ENCODE measurements at regions of chr11 and their contacts with region 1.

Region 1: GRCh38 chr11:43895601-43896000 is 15.0 kb downstream of the ALKBH3 start:
- DNase-seq: no peak
- ATAC-seq: no peak
- H3K4me3 ChIP-seq: no peak overlapping the region
- H3K27ac ChIP-seq: no peak overlapping the region
- H3K4me1 ChIP-seq: no peaks in the 10 kb centered on the region
- H3K27me3 ChIP-seq: no peaks in the 10 kb centered on the region
- CTCF ChIP-seq: no peak
- EP300 ChIP-seq: no peak
- POLR2A ChIP-seq: no peak
- RAD21 ChIP-seq: no peak

Region 2: DNA sequence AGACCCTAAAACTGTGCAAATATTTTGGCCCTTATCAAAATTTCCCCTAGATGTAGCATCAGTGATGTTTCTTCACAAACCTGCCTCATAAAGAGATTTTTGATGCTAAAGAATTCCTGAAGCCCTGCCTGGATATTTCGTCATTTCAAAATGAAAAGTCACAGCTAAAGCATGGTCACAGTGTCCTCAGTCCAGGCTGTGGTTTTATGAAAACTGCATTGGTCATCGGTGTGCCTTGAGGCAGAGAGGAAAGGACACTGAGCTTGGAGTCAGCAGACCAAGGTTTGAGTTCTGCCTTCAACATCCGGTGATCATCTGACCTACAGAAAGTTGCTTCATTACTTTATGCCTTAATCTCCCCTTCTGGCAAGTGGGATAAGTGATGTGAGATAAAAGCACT is 49.8 kb before region 1 on chr11:
- CTCF ChIA-PET with region 1: no interaction called
- POLR2A ChIA-PET with region 1: no interaction called
- RAD21 ChIA-PET with region 1: no interaction called
- SMC1A ChIA-PET with region 1: no interaction called
- in situ Hi-C with region 1: no loop called
- intact Hi-C with region 1: loop called (anchors 5 kb)
- DNase-seq: no peak
- ATAC-seq: no peak
- H3K4me3 ChIP-seq: no peak overlapping the region
- H3K27ac ChIP-seq: no peak overlapping the region
- H3K4me1 ChIP-seq: no peaks in the 10 kb centered on the region
- H3K27me3 ChIP-seq: no peaks in the 10 kb centered on the region
- CTCF ChIP-seq: no peak
- EP300 ChIP-seq: no peak
- POLR2A ChIP-seq: no peak
- RAD21 ChIP-seq: no peak

Region 3: GRCh38 chr11:43880640-43881159 is 14.9 kb before region 1 on chr11 and contains the start of gene ALKBH3:
- CTCF ChIA-PET with region 1: interaction called, 8 read pairs
- POLR2A ChIA-PET with region 1: no interaction called
- RAD21 ChIA-PET with region 1: no interaction called
- SMC1A ChIA-PET with region 1: interaction called, 10 read pairs
- in situ Hi-C with region 1: no loop called
- intact Hi-C with region 1: no loop called
- DNase-seq: peak; percentile 65
- ATAC-seq: peak; percentile 100
- H3K4me3 ChIP-seq: peak within 1 kb of the TSS; percentile 83
- H3K27ac ChIP-seq: peak within 1 kb of the TSS; percentile 47; the same call in 1 of the 2 replicates
- H3K4me1 ChIP-seq: peaks cover 4% of the 10 kb centered on the region
- H3K27me3 ChIP-seq: no peaks in the 10 kb centered on the region
- CTCF ChIP-seq: no peak
- EP300 ChIP-seq: no peak
- POLR2A ChIP-seq: peak; percentile 90
- RAD21 ChIP-seq: no peak
- polyA plus RNA-seq, gene ALKBH3: 22.1 to 36.9 TPM

Region 4: DNA sequence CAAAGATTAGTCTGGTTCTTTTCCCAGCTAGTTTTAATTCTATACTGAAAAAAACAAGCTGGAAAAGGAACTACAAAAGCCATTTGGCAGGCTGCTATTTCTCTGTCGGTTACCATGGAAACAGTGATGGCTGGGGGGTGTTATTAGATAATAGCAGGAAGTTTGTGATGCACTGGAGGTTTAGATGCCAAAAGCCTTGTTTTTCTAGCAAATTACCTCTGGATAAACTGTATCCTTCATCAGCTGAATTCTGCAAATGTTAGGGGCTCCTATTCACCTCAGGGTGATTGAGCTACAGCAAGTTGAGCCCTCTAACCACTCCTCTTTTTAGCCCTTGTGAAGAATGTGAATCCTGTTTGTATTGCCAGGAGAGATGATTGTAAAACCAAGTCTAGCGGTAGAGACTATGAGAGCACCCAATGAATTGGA is 10.2 kb after region 1 on chr11:
- CTCF ChIA-PET with region 1: interaction called, 10 read pairs
- POLR2A ChIA-PET with region 1: no interaction called
- RAD21 ChIA-PET with region 1: interaction called, 3 read pairs
- SMC1A ChIA-PET with region 1: interaction called, 5 read pairs
- in situ Hi-C with region 1: no loop called
- intact Hi-C with region 1: no loop called
- DNase-seq: no peak
- ATAC-seq: no peak
- H3K4me3 ChIP-seq: no peak overlapping the region
- H3K27ac ChIP-seq: no peak overlapping the region
- H3K4me1 ChIP-seq: peaks cover 6% of the 10 kb centered on the region; the same call in 1 of the 2 replicates
- H3K27me3 ChIP-seq: no peaks in the 10 kb centered on the region
- CTCF ChIP-seq: no peak
- EP300 ChIP-seq: no peak
- POLR2A ChIP-seq: no peak
- RAD21 ChIP-seq: no peak

Region 5: DNA sequence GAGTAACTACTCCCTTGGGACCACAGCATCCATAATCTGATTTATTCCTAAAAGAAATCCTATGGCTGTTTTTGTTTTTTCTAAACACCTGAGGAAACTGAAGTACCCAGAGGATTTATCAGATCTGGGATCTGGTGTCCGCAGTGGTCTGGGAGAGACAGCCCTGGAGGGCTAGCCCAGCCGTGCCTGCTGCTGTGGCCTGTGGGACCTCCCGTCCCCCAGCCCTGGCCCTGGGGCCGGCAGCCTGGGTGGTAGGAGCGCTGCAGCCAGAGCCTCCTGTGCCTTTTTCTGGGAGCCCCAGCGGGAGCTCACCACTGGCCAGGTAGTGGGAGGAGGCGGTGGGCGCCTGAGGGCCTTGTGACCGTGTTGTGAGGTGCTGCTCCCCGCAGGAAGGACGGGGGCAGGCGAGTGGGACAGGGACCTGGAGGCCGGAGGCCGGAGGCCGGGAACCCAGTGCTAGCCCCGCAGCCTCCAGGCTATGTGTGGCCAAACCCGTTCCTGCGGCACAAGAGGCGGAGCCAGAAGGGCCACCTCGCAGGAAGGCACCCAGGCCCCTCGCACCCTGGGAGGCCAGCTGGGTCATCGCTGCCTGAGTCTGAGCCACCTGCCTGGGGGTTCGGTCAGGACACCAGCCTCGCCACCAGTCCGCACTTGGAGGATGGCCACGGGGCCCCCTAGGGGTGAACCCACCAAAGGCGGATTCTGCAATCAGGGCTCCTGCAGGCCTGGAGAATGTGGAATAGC is 28.7 kb after region 1 on chr11:
- CTCF ChIA-PET with region 1: no interaction called
- POLR2A ChIA-PET with region 1: no interaction called
- RAD21 ChIA-PET with region 1: no interaction called
- SMC1A ChIA-PET with region 1: no interaction called
- in situ Hi-C with region 1: no loop called
- intact Hi-C with region 1: no loop called
- DNase-seq: no peak
- ATAC-seq: no peak
- H3K4me3 ChIP-seq: no peak overlapping the region
- H3K27ac ChIP-seq: no peak overlapping the region
- H3K4me1 ChIP-seq: no peaks in the 10 kb centered on the region
- H3K27me3 ChIP-seq: no peaks in the 10 kb centered on the region
- CTCF ChIP-seq: no peak
- EP300 ChIP-seq: no peak
- POLR2A ChIP-seq: no peak
- RAD21 ChIP-seq: no peak

Region 6: DNA sequence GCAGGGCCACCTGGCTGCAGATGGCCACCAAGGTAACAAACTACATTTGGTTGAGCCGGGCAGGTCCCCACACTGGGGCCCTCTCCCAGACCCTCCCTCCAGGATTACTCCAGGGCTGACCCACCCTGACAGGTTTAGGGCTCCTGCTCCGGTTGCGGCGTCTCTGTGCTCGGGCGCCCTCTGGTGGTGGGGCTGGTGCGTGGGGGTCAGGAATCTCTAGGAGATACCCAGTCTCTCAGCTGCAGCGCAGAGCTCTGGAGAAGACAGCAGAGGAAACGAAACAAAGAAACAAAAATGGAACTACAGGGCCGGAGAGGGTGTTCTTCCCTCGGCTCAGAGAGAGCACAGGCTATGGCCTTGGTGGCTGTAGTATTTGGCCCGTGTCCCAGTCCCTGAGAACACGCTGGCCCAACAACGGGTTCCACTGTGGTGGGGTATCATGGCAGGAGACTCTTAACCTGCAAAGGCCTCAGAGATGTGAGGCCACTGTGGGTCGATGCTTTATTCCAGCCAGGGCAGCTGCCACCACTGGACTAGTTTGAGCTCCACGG is 49.2 kb after region 1 on chr11:
- CTCF ChIA-PET with region 1: no interaction called
- POLR2A ChIA-PET with region 1: no interaction called
- RAD21 ChIA-PET with region 1: interaction called, 4 read pairs
- SMC1A ChIA-PET with region 1: interaction called, 5 read pairs
- in situ Hi-C with region 1: no loop called
- intact Hi-C with region 1: loop called (anchors 1 kb)
- DNase-seq: no peak
- ATAC-seq: peak; percentile 85
- H3K4me3 ChIP-seq: no peak overlapping the region
- H3K27ac ChIP-seq: no peak overlapping the region
- H3K4me1 ChIP-seq: peaks cover 3% of the 10 kb centered on the region; the same call in 1 of the 2 replicates
- H3K27me3 ChIP-seq: peaks cover 19 to 23% of the 10 kb centered on the region in 2 experiments
- CTCF ChIP-seq: peak; percentile 62 to 85 (median 75)
- EP300 ChIP-seq: no peak
- POLR2A ChIP-seq: no peak
- RAD21 ChIP-seq: peak; percentile 51

Region 7: GRCh38 chr11:44036811-44037657 is 141.4 kb after region 1 on chr11:
- CTCF ChIA-PET with region 1: interaction called, 28 read pairs
- POLR2A ChIA-PET with region 1: no interaction called
- RAD21 ChIA-PET with region 1: interaction called, 6 read pairs
- SMC1A ChIA-PET with region 1: no interaction called
- in situ Hi-C with region 1: no loop called
- intact Hi-C with region 1: loop called (anchors 1 kb)
- DNase-seq: peak; percentile 4
- ATAC-seq: peak; percentile 97
- H3K4me3 ChIP-seq: no peak overlapping the region
- H3K27ac ChIP-seq: no peak overlapping the region
- H3K4me1 ChIP-seq: no peaks in the 10 kb centered on the region
- H3K27me3 ChIP-seq: peaks cover 0 to 2% of the 10 kb centered on the region in 2 experiments; a peak in 1 of 4 replicates
- CTCF ChIP-seq: peak; percentile 69 to 76 (median 72)
- EP300 ChIP-seq: no peak
- POLR2A ChIP-seq: no peak
- RAD21 ChIP-seq: peak; percentile 66